ENCODE measurements at regions of chr14 and their contacts with region 1.

Region 1: GRCh38 chr14:54773171-54773975 is 129.3 kb downstream of the GCH1 start:
- DNase-seq: peak; percentile 98
- H3K4me3 ChIP-seq: no peak overlapping the region
- H3K27me3 ChIP-seq: no peaks in the 10 kb centered on the region
- CTCF ChIP-seq: peak; percentile 69

Region 2: DNA sequence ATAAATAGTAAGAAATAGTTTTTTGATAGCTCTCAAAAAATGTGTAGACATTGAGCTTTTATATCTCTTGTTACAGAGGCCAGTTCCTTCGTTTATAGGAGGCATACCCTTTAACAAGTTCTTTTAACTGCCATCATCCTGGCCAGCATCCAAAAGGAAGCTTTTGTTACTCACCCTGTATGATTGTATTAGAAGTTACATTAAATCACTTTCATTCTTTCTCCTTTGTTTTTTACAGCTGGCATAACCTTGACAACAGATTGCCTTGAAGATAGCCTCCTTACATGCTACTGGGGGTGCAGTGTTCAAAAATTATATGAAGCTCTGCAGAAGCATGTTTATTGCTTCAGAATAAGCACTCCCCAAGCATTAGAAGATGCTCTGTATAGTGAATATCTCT is 243.6 kb before region 1 on chr14:
- CTCF ChIA-PET with region 1: no interaction called
- POLR2A ChIA-PET with region 1: no interaction called
- DNase-seq: peak; percentile 8
- H3K4me3 ChIP-seq: no peak overlapping the region
- H3K27me3 ChIP-seq: no peaks in the 10 kb centered on the region
- CTCF ChIP-seq: no peak

Region 3: DNA sequence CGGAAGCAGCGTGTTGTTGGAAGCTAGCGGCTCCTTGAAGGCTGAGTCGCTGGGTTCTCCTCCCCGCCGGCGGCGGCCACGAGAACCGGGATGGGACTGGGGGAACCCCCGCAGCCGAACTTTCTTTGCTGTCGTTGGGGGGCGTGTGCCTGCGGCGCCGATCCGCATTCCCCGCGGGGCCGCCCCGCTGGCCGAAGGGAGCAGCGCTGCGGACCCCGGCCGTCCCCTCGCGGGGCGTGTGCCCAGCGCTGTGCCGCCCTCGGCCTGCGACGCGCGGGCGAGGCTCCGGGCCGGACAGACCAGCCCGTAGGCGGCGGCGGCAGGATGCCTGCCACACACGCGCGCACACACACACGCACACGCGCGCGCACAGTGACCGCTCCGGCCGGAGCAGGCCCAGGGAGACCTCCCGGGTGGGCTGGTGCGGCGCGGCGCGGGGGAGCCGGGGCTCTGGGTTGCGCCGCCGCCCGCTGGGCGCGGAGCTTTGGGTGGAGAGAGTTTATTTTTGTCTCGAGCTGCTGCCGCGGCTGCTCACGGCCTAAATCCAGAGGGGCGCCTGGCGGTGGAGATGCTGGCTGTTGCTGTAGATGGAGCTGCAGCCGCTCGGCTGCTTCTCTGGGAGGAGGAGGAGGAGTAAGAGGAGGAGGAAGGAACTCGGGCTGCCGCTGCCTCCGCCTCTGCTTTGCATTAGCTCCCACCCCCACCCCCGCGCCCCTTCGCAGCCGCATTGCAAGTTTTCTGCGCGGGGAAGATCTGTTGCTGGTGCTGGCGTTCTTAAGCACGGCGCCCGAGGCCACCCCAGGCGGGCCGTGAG is 206.8 kb before region 1 on chr14 and contains the start of gene SAMD4A:
- CTCF ChIA-PET with region 1: interaction called, 111 read pairs
- POLR2A ChIA-PET with region 1: interaction called, 3 read pairs
- DNase-seq: no peak
- H3K4me3 ChIP-seq: peak within 1 kb of the TSS; percentile 86
- H3K27me3 ChIP-seq: no peaks in the 10 kb centered on the region
- CTCF ChIP-seq: peak; percentile 46; the same call in 1 of the 2 replicates
- polyA plus RNA-seq, gene SAMD4A: 13.4 and 16.9 TPM in 2 replicates

Region 4: GRCh38 chr14:54683882-54684794 is 89.2 kb before region 1 on chr14:
- CTCF ChIA-PET with region 1: interaction called, 32 read pairs
- POLR2A ChIA-PET with region 1: no interaction called
- DNase-seq: peak; percentile 84
- H3K4me3 ChIP-seq: no peak overlapping the region
- H3K27me3 ChIP-seq: no peaks in the 10 kb centered on the region
- CTCF ChIP-seq: no peak

Region 5: GRCh38 chr14:54691525-54692283 is 81.7 kb before region 1 on chr14:
- CTCF ChIA-PET with region 1: interaction called, 32 read pairs
- POLR2A ChIA-PET with region 1: no interaction called
- DNase-seq: no peak
- H3K4me3 ChIP-seq: no peak overlapping the region
- H3K27me3 ChIP-seq: no peaks in the 10 kb centered on the region
- CTCF ChIP-seq: peak; percentile 92

Region 6: DNA sequence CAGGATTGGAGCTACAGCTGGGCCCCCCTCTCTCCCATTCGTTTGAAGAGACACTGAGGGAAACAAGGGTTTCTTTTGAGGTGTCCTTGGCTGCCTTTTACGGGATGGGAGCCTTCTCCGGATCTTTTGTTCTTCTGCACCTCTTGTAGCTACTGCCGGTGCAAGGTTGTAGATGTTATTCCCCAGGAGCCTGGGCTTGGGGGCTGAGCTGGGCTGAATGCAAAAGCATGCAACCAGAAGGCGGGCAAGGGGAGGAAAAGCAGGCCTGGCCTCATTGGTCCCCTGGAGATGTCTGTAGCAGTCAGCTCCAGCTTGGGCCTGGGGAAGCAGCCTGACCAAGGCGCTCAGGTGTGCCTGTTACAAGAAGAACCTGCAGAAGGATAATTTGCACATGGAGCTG is 18.9 kb after region 1 on chr14:
- CTCF ChIA-PET with region 1: interaction called, 10 read pairs
- POLR2A ChIA-PET with region 1: no interaction called
- DNase-seq: no peak
- H3K4me3 ChIP-seq: no peak overlapping the region
- H3K27me3 ChIP-seq: no peaks in the 10 kb centered on the region
- CTCF ChIP-seq: no peak

Region 7: GRCh38 chr14:54981698-54982097 is 208.3 kb after region 1 on chr14:
- CTCF ChIA-PET with region 1: no interaction called
- POLR2A ChIA-PET with region 1: no interaction called
- DNase-seq: no peak
- H3K4me3 ChIP-seq: no peak overlapping the region
- H3K27me3 ChIP-seq: no peaks in the 10 kb centered on the region
- CTCF ChIP-seq: peak; percentile 20; the same call in 1 of the 2 replicates

Measured in BJ (cell line).